Activated CD8-positive, alpha-beta memory T cell treated with anti-CD3 and anti-CD28 coated beads, Interleukin-2, amount 10 ng/mL, durations not matched to agents 7 days and 5 days (primary cell): ENCODE measurements at regions of chr7 and their contacts with region 1.

Region 1: DNA sequence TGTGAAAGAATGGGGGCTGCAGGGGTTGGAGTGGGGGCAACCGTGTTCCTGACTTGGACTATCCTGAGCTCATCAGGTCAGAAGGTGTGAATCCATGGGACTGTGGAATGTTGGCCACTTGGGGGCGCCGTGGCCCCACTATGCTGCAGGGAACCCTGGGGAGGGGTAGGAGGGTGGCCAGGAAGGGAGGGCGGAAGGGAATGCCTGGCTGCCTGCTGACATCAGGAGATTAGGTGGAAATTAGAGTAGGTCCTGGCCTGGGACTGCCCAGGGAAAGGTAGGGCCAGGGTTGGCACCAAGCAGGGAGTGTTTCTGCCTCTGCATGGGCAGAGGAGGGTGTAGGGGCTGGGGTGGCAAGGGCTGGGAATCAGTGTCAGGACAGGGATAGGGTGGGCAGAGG is 65.8 kb upstream of the PRSS58 start:
- DNase-seq: peak; percentile 59
- ATAC-seq: peak; percentile 62
- H3K4me3 Mint-ChIP-seq: no peak overlapping the region
- H3K27ac Mint-ChIP-seq: peak overlapping the region; percentile 70
- H3K4me1 Mint-ChIP-seq: peaks cover 10% of the 10 kb centered on the region
- H3K27me3 Mint-ChIP-seq: peaks cover 5% of the 10 kb centered on the region

Region 2: GRCh38 chr7:142301923-142302550 is 21.7 kb before region 1 on chr7:
- CTCF ChIA-PET with region 1: interaction called, 36 read pairs
- DNase-seq: no peak
- ATAC-seq: no peak
- H3K4me3 Mint-ChIP-seq: no peak overlapping the region
- H3K27ac Mint-ChIP-seq: no peak overlapping the region
- H3K4me1 Mint-ChIP-seq: peaks cover 15% of the 10 kb centered on the region
- H3K27me3 Mint-ChIP-seq: peaks cover 22% of the 10 kb centered on the region

Region 3: DNA sequence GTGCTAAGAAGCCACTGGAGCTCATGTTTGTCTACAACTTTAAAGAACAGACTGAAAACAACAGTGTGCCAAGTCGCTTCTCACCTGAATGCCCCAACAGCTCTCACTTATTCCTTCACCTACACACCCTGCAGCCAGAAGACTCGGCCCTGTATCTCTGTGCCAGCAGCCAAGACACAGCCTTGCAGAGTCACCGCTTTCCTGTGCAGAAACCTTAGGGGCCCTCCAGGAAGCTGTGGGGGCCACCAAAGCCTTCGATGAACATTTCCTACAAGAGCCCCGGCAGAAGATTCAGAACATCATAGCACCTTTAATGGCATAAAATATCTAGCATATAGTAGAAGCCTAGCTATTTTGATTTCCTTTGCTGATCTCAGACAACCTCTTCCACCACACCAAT is 22.1 kb after region 1 on chr7:
- CTCF ChIA-PET with region 1: interaction called, 11 read pairs
- DNase-seq: peak; percentile 70
- ATAC-seq: peak; percentile 79
- H3K4me3 Mint-ChIP-seq: peak overlapping the region; percentile 33
- H3K27ac Mint-ChIP-seq: peak overlapping the region; percentile 44
- H3K4me1 Mint-ChIP-seq: peaks cover 16% of the 10 kb centered on the region
- H3K27me3 Mint-ChIP-seq: peaks cover 7% of the 10 kb centered on the region

Region 4: GRCh38 chr7:142357953-142358520 is 34.3 kb after region 1 on chr7:
- CTCF ChIA-PET with region 1: interaction called, 12 read pairs
- DNase-seq: no peak
- ATAC-seq: peak; percentile 68
- H3K4me3 Mint-ChIP-seq: no peak overlapping the region
- H3K27ac Mint-ChIP-seq: no peak overlapping the region
- H3K4me1 Mint-ChIP-seq: peaks cover 27% of the 10 kb centered on the region
- H3K27me3 Mint-ChIP-seq: peaks cover 19% of the 10 kb centered on the region